Cardiac septum (tissue), 1 donor: ENCODE measurements at regions of chr7 and their contacts with region 1.

Region 1: GRCh38 chr7:98400542-98401340 is at the start of gene BAIAP2L1:
- DNase-seq: peak; percentile 86
- total RNA-seq, gene BAIAP2L1: 1.9 TPM

Region 2: GRCh38 chr7:98294796-98295382 is 105.9 kb before region 1 on chr7:
- intact Hi-C with region 1: loop called (anchors 5 kb)
- DNase-seq: no peak

Region 3: GRCh38 chr7:98365863-98366561 is 34.7 kb before region 1 on chr7:
- intact Hi-C with region 1: loop called (anchors 5 kb)
- DNase-seq: no peak